ENCODE measurements at regions of chr13 and their contacts with region 1.

Region 1: GRCh38 chr13:39961036-39961435 is 305.6 kb downstream of the COG6 start:
- DNase-seq: peak; percentile 60
- H3K4me3 ChIP-seq: no peak overlapping the region
- H3K27ac ChIP-seq: no peak overlapping the region
- H3K4me1 ChIP-seq: peaks cover 10% of the 10 kb centered on the region
- H3K27me3 ChIP-seq: no peaks in the 10 kb centered on the region
- CTCF ChIP-seq: no peak
- POLR2A ChIP-seq: no peak

Region 2: DNA sequence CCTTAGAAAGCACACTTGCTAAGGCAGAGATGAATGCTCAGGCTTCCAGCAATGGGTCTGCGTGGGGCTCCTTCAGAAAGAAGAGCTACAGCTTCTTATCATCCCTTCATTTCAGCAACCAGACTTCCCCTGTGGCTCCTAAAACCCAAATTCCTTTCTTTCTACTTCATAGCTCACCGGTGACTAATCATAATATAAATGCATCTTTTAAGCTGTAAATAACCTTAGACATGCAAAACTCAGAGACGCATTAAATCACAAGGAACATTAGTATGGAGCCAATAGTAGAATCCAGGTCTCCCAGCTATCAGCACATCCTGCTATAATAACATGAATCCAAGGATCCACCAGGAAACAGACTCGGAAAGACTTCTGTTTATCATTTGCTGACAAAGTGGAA is 70.0 kb after region 1 on chr13:
- CTCF ChIA-PET with region 1: no interaction called
- POLR2A ChIA-PET with region 1: no interaction called
- dilution Hi-C with region 1: no loop called
- intact Hi-C with region 1: loop called (anchors 1 kb)
- DNase-seq: peak; percentile 84
- H3K4me3 ChIP-seq: no peak overlapping the region
- H3K27ac ChIP-seq: peak overlapping the region; percentile 95
- H3K4me1 ChIP-seq: peaks cover 19% of the 10 kb centered on the region
- H3K27me3 ChIP-seq: no peaks in the 10 kb centered on the region
- CTCF ChIP-seq: no peak
- POLR2A ChIP-seq: no peak